Breast epithelium (tissue), 4 donors: ENCODE measurements at regions of chr5 and their contacts with region 1.

Region 1: DNA sequence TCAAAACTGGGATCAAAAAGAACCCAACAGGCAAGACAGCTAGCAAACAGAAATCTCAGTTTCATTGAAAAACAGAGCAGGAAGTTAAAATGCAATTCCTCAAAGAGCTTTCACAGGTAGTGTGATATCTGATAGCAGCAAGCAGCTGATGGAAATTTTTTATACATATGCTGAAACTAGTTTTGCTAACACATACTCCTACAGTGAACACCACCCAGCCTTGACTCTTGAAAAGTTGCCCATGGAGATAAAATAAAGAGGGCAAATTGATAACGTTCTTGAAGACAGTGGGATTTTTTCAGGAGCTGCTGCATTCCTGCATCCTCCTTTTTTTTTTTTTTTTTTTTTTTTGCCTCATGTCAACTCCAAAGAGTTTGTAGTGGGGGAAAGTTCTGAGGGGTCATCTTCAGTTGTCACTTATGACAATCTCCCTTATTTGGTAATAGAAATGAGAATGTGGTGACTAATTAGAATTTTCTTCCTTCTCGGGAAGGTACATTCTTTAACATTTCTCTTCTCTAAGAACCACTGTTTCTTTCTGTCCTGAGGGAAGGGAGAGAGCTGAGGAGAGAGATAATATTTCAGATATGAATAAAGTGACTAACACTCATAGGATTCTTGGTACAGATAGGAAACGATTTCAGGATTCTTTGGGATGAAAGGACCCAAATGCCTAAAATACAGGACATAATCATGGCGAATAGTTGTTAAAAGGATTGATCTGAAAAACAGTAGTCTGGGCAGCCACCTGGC is 24.6 kb downstream of the SH3RF2 start:
- DNase-seq: no peak
- H3K4me3 ChIP-seq: no peak overlapping the region
- H3K27ac ChIP-seq: peak overlapping the region; percentile 48 to 55
- H3K4me1 ChIP-seq: no peaks in the 10 kb centered on the region
- H3K27me3 ChIP-seq: no peaks in the 10 kb centered on the region
- CTCF ChIP-seq: no peak
- POLR2A ChIP-seq: no peak

Region 2: GRCh38 chr5:145130996-145131395 is 830.0 kb before region 1 on chr5:
- intact Hi-C with region 1: loop called (anchors 5 kb)
- DNase-seq: no peak
- H3K4me3 ChIP-seq: no peak overlapping the region
- H3K27ac ChIP-seq: no peak overlapping the region
- H3K4me1 ChIP-seq: no peaks in the 10 kb centered on the region
- H3K27me3 ChIP-seq: no peaks in the 10 kb centered on the region
- CTCF ChIP-seq: no peak
- POLR2A ChIP-seq: no peak